Activated naive CD4-positive, alpha-beta T cell treated with anti-CD3 and anti-CD28 coated beads, Interleukin-2, amount 10 ng/mL, durations not matched to agents 7 days and 5 days (primary cell): ENCODE measurements at regions of chr14 and their contacts with region 1.

Region 1: GRCh38 chr14:74257078-74257989 is 18.1 kb downstream of the VSX2 start:
- DNase-seq: peak; percentile 68
- H3K4me3 Mint-ChIP-seq: peak overlapping the region; percentile 76
- H3K27ac Mint-ChIP-seq: peak overlapping the region; percentile 60
- H3K4me1 Mint-ChIP-seq: peaks cover 12% of the 10 kb centered on the region
- H3K27me3 Mint-ChIP-seq: peaks cover 67% of the 10 kb centered on the region

Region 2: DNA sequence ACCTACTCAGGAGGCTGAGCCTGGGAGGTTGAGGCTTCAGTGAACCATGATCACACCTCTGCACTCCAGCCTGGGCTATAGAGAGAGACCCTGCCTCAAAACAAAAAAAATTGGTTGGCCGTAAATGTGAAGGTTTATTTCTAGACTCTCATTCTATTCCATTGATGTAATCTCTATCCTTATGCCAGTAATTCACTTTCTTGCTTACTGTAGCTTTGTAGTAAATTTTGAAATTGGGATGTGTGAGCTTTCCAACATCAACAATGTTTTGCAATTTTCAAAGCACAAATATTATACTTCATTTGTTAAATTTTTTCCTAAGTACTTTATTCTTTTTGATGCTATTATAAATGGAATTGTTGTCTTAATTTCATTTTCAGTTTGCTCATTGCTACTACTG is 148.0 kb before region 1 on chr14:
- CTCF ChIA-PET with region 1: interaction called, 18 read pairs
- DNase-seq: no peak
- H3K4me3 Mint-ChIP-seq: no peak overlapping the region
- H3K27ac Mint-ChIP-seq: no peak overlapping the region
- H3K4me1 Mint-ChIP-seq: no peaks in the 10 kb centered on the region
- H3K27me3 Mint-ChIP-seq: no peaks in the 10 kb centered on the region

Region 3: GRCh38 chr14:74205882-74206281 is 51.5 kb before region 1 on chr14:
- CTCF ChIA-PET with region 1: no interaction called
- DNase-seq: no peak
- H3K4me3 Mint-ChIP-seq: no peak overlapping the region
- H3K27ac Mint-ChIP-seq: no peak overlapping the region
- H3K4me1 Mint-ChIP-seq: no peaks in the 10 kb centered on the region
- H3K27me3 Mint-ChIP-seq: no peaks in the 10 kb centered on the region

Region 4: DNA sequence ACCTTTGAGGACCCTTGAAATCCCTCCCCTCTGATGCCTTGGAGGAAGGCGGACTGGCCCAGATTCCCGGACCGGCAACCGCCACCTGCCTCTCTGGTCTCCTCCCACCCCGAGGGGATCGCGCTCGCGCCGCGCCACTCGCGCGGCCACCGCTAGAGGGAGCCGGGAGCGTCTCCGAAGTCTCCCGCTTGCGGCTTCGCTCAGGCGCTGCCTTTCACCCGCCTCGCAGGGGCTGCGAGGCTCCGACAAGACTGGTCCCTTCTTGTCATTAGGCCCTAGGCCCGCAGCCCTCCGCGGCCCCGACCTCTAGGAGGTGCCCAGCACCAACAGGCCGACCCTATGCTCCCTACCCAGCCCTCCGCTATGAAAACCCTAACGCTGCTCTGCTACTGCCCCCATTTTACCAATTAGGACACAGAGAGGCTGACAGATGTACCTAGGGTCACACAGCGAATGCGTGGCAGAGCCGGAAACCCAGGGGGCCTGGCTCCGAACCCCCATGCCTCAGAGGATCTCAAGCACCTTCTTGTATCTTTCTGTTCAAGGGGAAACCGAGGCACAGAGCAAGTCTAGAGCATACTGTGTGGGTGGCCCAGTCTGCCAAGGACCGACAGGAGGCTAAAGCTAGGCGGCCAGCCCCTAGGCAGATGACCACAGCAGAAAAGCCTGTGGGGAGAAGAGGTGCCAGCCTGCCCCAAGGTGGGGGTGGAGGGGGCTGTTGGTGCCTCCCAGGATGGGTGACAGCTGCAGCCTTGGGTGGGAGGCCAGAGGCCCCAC is 39.5 kb before region 1 on chr14:
- CTCF ChIA-PET with region 1: interaction called, 11 read pairs
- DNase-seq: peak; percentile 82
- H3K4me3 Mint-ChIP-seq: no peak overlapping the region
- H3K27ac Mint-ChIP-seq: no peak overlapping the region
- H3K4me1 Mint-ChIP-seq: peaks cover 2% of the 10 kb centered on the region
- H3K27me3 Mint-ChIP-seq: peaks cover 67% of the 10 kb centered on the region

Region 5: GRCh38 chr14:74437496-74438053 is 180.2 kb after region 1 on chr14:
- CTCF ChIA-PET with region 1: no interaction called
- DNase-seq: no peak
- H3K4me3 Mint-ChIP-seq: no peak overlapping the region
- H3K27ac Mint-ChIP-seq: no peak overlapping the region
- H3K4me1 Mint-ChIP-seq: no peaks in the 10 kb centered on the region
- H3K27me3 Mint-ChIP-seq: peaks cover 28% of the 10 kb centered on the region